ENCODE measurements at regions of chr16 and their contacts with region 1.

Region 1: GRCh38 chr16:76900285-76901263 is 290.4 kb upstream of the MON1B start:
- DNase-seq: no peak
- H3K4me3 ChIP-seq: no peak overlapping the region
- H3K27ac ChIP-seq: no peak overlapping the region
- H3K4me1 ChIP-seq: no peaks in the 10 kb centered on the region
- CTCF ChIP-seq: no peak

Region 2: DNA sequence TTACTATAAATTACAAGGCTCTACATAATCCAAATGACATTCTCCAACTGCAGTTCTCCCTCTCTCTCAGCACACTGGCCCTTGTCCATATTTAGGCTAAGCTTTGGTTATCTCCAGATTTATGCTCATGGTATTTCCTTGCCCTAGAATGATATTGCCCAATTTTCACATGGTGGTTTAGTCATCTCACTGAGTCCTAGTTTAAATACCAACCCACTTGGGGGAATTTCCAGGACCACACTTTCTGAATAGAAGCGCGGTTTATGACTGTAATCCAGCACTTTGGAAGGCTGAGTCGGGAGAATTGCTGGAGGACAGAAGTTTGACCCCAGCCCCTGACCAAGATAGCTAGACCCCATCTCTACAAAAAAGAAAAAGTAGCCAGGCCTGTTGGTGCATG is 10.4 kb after region 1 on chr16:
- CTCF ChIA-PET with region 1: no interaction called
- POLR2A ChIA-PET with region 1: interaction called, 3 read pairs
- intact Hi-C with region 1: loop called (anchors 1 kb)
- DNase-seq: no peak
- H3K4me3 ChIP-seq: no peak overlapping the region
- H3K27ac ChIP-seq: no peak overlapping the region
- H3K4me1 ChIP-seq: no peaks in the 10 kb centered on the region
- CTCF ChIP-seq: no peak